ENCODE measurements at regions of chr10 and their contacts with region 1.

Region 1: GRCh38 chr10:27369880-27370279 is 129.3 kb upstream of the ACBD5 start:
- DNase-seq: no peak
- H3K4me3 Mint-ChIP-seq: no peak overlapping the region
- H3K27ac Mint-ChIP-seq: no peak overlapping the region
- H3K4me1 Mint-ChIP-seq: peaks cover 4% of the 10 kb centered on the region
- H3K27me3 Mint-ChIP-seq: peaks cover 6% of the 10 kb centered on the region

Region 2: DNA sequence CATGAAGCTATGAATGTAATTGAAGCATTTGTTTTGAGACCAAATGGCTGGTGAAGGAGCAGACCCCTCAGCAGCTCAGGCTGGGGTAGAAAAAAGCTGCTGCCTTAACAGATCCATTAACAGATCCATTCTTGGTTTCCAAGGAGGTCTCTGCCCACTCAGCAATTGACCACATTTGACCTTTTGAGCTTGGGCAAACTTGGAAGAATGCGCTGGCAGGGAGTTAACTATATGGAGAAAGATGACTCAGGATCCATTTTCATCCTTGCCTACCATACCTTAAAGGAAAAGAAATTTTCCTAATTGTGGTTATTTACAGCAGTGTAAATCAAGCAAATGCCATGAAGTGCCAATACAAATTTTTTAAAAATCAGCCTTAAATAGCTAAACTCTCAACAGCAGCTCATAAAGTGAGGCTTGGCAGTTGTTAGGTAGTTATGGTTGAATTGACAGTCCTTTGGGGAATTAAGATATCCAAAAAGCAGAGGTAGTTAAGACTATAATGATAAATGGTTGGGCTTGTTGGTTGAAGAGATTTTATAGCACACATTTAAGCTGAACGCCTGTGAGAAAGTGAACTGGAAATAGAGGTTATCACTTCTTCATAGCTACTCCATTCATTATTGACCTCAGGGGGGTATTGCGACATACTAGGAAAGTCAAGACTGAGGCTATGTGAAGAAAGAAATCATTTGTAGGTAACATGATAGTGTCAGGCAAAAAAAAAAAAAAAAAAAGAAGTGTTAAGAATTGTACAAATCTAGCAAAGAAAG is 291.8 kb after region 1 on chr10:
- intact Hi-C with region 1: loop called (anchors 2 kb)
- DNase-seq: no peak
- H3K4me3 Mint-ChIP-seq: no peak overlapping the region
- H3K27ac Mint-ChIP-seq: no peak overlapping the region
- H3K4me1 Mint-ChIP-seq: no peaks in the 10 kb centered on the region
- H3K27me3 Mint-ChIP-seq: peaks cover 26% of the 10 kb centered on the region

Region 3: DNA sequence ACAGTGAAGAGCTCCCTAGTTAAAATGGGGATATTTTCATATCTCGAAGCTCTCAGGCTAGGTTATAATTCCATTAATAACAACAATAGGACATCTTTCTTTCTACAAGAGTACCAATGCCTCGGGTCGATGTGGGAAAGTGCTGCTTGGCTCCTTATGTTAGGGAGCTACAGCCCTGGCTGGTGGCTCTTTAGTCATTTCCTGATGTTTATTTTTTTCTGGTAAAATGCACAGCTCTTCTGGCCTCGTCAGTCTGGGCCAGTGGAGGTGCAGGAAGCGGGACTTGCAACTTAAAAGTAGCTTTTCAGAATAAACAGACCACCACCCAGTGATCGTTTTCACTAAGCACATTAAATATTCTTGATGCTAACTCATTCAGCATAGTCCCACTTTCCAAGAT is 317.4 kb after region 1 on chr10:
- intact Hi-C with region 1: no loop called
- DNase-seq: no peak
- H3K4me3 Mint-ChIP-seq: no peak overlapping the region
- H3K27ac Mint-ChIP-seq: no peak overlapping the region
- H3K4me1 Mint-ChIP-seq: no peaks in the 10 kb centered on the region
- H3K27me3 Mint-ChIP-seq: peaks cover 2% of the 10 kb centered on the region

Region 4: DNA sequence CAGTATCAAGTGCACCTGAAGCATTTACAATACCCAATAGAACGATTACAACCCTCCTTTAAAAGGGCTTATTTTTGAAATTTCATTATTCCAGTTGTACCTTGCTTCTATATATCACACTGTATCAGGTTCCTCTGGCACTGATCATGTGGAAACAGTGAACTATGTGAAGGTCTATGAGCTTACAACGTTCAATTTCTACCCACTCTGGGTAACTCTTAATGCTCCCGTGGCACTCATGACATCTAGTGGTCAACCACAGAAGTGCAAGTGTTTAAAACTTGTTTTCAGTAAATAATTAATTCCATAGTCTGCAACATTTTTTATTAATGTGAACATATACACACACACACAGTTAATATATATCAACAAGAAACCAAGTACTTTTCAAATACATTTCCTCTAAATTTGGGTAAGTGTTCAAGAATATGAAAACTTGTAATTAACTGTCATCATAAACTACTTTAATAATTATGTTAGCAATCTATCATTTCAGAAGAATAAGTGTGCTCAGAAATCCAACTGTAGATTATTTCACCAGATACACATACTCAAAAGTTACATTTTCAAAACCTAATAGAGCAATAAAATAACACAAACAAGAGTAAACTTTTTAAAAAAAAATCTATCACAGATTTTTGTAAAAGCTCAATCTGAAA is 872.0 kb after region 1 on chr10:
- intact Hi-C with region 1: loop called (anchors 5 kb)
- DNase-seq: peak; percentile 4
- H3K4me3 Mint-ChIP-seq: no peak overlapping the region
- H3K27ac Mint-ChIP-seq: no peak overlapping the region
- H3K4me1 Mint-ChIP-seq: no peaks in the 10 kb centered on the region
- H3K27me3 Mint-ChIP-seq: no peaks in the 10 kb centered on the region